H1 (cell line): ENCODE measurements at regions of chr16 and their contacts with region 1.

Region 1: GRCh38 chr16:4586291-4586690 is 28.4 kb downstream of the UBALD1 start:
- DNase-seq: no peak
- H3K4me3 ChIP-seq: no peak overlapping the region
- H3K27ac ChIP-seq: no peak overlapping the region
- H3K4me1 ChIP-seq: no peaks in the 10 kb centered on the region; a peak in 1 of 7 replicates
- H3K27me3 ChIP-seq: no peaks in the 10 kb centered on the region; a peak in 1 of 7 replicates
- CTCF ChIP-seq: no peak
- EP300 ChIP-seq: no peak
- POLR2A ChIP-seq: no peak
- RAD21 ChIP-seq: no peak

Region 2: DNA sequence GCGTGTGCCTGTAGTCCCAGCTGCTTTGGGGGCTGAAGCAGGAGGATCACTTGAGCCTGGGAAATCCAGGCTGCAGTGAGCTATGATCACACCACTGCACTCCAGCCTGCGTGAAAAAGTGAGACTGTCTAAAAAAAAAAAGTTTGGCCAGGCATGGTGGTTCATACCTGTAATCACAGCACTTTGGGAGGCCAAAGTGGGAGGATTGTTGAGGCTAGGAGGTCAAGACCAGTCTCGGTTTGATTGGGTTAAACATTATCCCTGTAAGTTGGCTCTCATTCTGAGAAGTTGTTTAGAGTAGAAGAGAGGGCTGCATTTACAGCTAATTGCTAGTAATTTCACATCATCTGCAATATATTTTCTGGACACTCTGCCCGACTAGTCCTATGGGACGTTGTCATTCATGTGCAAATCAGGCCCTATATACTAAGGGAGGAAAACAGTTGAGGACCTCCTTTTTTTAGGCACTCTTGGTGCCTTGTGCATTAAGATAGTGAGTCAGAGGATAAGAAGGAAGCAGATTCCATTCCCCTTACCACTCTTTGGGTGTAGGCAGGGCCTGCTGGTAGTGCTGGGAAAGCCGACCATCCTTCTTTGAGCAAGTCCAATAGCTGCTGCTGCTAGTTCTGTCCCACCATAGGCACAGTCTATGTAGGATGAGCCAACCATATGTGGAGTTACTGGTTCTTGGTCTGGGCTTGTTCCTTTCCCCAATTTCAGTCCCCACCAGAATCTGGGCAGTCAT is 91.4 kb before region 1 on chr16:
- CTCF ChIA-PET with region 1: interaction called, 10 read pairs
- POLR2A ChIA-PET with region 1: no interaction called
- DNase-seq: no peak
- H3K4me3 ChIP-seq: no peak overlapping the region
- H3K27ac ChIP-seq: no peak overlapping the region
- H3K4me1 ChIP-seq: no peaks in the 10 kb centered on the region
- H3K27me3 ChIP-seq: no peaks in the 10 kb centered on the region
- CTCF ChIP-seq: no peak
- EP300 ChIP-seq: no peak
- POLR2A ChIP-seq: no peak
- RAD21 ChIP-seq: no peak

Region 3: DNA sequence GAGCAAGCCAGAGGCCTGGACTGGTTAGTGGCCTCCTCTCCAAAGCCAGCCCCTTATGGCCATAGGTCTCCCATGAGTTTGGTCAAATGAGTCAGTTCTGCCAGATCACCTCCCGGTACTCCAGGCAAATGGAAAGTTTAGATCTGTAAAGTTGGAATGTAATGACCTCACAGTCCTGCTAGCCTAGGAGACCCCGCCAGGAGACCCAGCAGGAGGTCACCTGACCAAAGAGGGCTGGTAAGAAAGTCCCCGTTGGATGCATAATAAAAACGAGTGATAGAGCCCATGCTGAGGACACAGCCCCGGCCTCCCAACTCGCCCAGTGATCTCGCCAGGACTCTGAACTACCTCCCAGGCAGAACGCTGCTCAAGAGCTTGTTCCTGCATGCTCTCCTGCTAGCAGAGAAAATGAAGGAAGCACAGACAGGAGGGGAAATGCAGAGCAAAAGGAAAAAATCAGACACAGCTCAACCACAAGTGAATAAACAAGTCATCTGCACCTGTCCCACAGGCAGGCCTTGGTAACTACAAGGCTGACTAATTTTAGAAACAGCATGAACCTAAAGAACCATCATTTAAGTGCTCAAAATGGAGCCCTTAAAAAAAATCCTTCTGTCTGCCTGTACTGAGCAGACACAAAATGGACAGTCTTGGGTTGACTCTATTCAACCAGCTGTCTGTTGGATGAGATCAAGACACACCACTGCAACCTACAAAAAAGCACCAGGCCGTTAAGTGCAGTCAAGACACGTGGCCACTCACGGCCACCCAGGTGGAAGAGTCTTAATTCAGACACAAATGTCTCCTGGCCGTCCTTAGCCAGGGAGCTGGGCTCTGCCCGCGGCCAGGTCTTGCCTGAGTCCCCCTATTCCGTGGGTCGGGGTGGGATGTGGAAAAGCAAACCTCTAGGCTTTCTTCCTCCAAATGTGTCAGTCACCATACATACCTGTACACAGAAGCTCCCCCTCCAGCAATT is 56.9 kb before region 1 on chr16:
- CTCF ChIA-PET with region 1: interaction called, 26 read pairs
- POLR2A ChIA-PET with region 1: interaction called, 6 read pairs
- DNase-seq: peak; percentile 76 to 91
- H3K4me3 ChIP-seq: peak overlapping the region in 2 of 4 experiments; percentile 12 to 17; a peak in 2 of 8 replicates
- H3K27ac ChIP-seq: peak overlapping the region; percentile 76
- H3K4me1 ChIP-seq: peaks cover 4 to 14% (median 10%) of the 10 kb centered on the region in 4 experiments
- H3K27me3 ChIP-seq: no peaks in the 10 kb centered on the region
- CTCF ChIP-seq: 0 out of 4 replicates have a peak, but pooled peaks of 1 of the 3 experiments have one; percentile 2
- EP300 ChIP-seq: 0 out of 3 replicates have a peak, but pooled peaks of 1 of the 2 experiments have one; percentile 59
- POLR2A ChIP-seq: 0 out of 3 replicates have a peak, but pooled peaks of 1 of the 2 experiments have one; percentile 51
- RAD21 ChIP-seq: no peak

Region 4: GRCh38 chr16:4561596-4561995 is 24.7 kb before region 1 on chr16:
- CTCF ChIA-PET with region 1: interaction called, 21 read pairs
- POLR2A ChIA-PET with region 1: interaction called, 3 read pairs
- DNase-seq: no peak
- H3K4me3 ChIP-seq: no peak overlapping the region
- H3K27ac ChIP-seq: no peak overlapping the region
- H3K4me1 ChIP-seq: no peaks in the 10 kb centered on the region
- H3K27me3 ChIP-seq: no peaks in the 10 kb centered on the region
- CTCF ChIP-seq: no peak
- EP300 ChIP-seq: no peak
- POLR2A ChIP-seq: no peak
- RAD21 ChIP-seq: no peak

Region 5: GRCh38 chr16:4606354-4606753 is 20.1 kb after region 1 on chr16:
- CTCF ChIA-PET with region 1: interaction called, 21 read pairs
- POLR2A ChIA-PET with region 1: interaction called, 126 read pairs
- DNase-seq: no peak
- H3K4me3 ChIP-seq: no peak overlapping the region
- H3K27ac ChIP-seq: no peak overlapping the region
- H3K4me1 ChIP-seq: peaks cover 0 to 15% (median 8%) of the 10 kb centered on the region in 4 experiments; a peak in 6 of 7 replicates
- H3K27me3 ChIP-seq: no peaks in the 10 kb centered on the region; a peak in 1 of 7 replicates
- CTCF ChIP-seq: no peak
- EP300 ChIP-seq: no peak
- POLR2A ChIP-seq: no peak
- RAD21 ChIP-seq: no peak

Region 6: GRCh38 chr16:4859900-4860255 is 273.6 kb after region 1 on chr16:
- CTCF ChIA-PET with region 1: no interaction called
- POLR2A ChIA-PET with region 1: no interaction called
- DNase-seq: no peak
- H3K4me3 ChIP-seq: no peak overlapping the region
- H3K27ac ChIP-seq: no peak overlapping the region
- H3K4me1 ChIP-seq: no peaks in the 10 kb centered on the region
- H3K27me3 ChIP-seq: no peaks in the 10 kb centered on the region
- CTCF ChIP-seq: no peak
- EP300 ChIP-seq: no peak
- POLR2A ChIP-seq: no peak
- RAD21 ChIP-seq: no peak